HEK293 (cell line): ENCODE measurements at regions of chr15 and their contacts with region 1.

Region 1: GRCh38 chr15:68672781-68673205 is 94.0 kb downstream of the CORO2B start:
- H3K4me3 ChIP-seq: no peak overlapping the region
- H3K27ac ChIP-seq: no peak overlapping the region
- H3K4me1 ChIP-seq: no peaks in the 10 kb centered on the region
- CTCF ChIP-seq: peak; percentile 67

Region 2: DNA sequence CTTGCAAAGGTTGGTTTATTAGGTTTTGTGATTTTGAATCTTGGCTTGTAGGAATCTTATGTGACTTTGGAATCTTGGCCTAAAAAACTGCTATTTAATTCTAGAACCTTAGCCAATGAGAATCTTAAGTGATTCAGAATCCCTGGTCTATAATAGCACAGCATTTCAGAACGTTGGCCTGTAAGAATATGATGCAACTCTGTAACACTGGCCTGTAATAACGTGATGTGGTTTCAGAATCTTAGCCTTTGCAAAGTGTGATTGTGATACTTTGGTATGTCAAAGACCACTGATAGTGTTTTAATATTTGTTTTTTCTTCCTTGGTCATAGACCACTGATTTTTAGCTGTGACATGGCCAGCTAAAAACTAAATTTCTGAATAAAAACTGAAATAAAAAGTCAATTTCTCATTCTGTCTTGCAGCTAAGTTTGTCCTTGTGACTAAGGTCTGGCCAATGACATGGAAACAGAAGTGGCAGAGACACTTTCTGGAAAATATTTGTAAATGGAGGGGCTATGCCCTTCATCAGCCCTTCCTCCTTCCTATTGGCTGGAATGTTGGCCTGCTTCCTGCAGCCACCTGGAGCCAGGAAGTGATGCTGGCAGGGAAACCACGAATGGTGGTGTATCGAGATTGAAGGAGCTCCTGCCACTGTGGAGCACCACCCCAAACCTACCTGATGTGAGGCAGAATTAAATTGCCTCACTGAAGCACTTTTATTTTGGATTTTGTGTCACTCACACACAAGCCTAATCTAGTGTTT is 136.3 kb before region 1 on chr15:
- CTCF ChIA-PET with region 1: interaction called, 15 read pairs
- POLR2A ChIA-PET with region 1: no interaction called
- H3K4me3 ChIP-seq: no peak overlapping the region
- H3K27ac ChIP-seq: no peak overlapping the region
- H3K4me1 ChIP-seq: no peaks in the 10 kb centered on the region
- CTCF ChIP-seq: no peak

Region 3: DNA sequence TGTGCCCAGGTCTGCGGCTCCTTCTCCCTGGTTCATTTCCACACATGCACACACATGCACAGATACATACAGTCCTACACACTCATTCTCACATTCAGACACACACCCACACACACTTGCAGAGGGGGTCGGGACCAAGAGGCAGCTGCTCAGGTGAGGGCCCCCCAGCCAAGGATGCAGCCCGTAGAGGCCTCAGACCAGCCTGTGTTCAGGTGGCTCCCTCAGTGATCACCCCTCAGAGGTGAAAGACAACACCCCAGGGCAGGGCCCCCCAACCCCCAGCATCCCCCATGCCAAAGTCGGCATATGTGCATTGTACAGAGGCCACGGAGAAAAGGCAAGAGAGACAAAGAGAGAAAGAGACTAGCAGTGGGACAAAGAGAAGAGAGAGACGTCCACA is 99.9 kb before region 1 on chr15:
- CTCF ChIA-PET with region 1: interaction called, 36 read pairs
- POLR2A ChIA-PET with region 1: no interaction called
- H3K4me3 ChIP-seq: no peak overlapping the region
- H3K27ac ChIP-seq: no peak overlapping the region
- H3K4me1 ChIP-seq: peaks cover 3% of the 10 kb centered on the region; the same call in 1 of the 2 replicates
- CTCF ChIP-seq: no peak

Region 4: DNA sequence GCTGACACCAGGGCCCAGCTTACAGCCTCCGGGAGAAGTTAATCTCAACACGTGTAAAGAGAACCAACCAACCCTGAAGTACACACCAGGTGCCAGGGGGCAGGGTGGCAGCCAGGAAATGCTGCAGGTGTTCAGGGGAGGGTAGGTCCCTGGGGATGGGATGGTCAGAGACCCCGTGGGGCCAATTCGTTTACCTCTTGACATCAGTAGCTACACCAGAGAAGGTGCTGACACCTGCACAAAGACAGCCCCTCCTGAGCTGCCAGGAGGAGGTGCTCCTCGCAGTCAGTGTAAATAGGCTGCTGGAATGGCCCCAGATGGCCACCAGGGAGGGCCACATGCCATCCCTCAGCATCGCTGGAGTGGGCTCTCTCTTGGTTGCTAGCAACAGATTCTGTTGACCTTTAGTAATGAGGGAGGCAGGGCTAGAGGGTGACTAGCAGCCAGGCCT is 41.2 kb before region 1 on chr15:
- CTCF ChIA-PET with region 1: interaction called, 12 read pairs
- POLR2A ChIA-PET with region 1: no interaction called
- H3K4me3 ChIP-seq: no peak overlapping the region
- H3K27ac ChIP-seq: no peak overlapping the region
- H3K4me1 ChIP-seq: no peaks in the 10 kb centered on the region
- CTCF ChIP-seq: peak; percentile 30; the same call in 1 of the 2 replicates

Region 5: DNA sequence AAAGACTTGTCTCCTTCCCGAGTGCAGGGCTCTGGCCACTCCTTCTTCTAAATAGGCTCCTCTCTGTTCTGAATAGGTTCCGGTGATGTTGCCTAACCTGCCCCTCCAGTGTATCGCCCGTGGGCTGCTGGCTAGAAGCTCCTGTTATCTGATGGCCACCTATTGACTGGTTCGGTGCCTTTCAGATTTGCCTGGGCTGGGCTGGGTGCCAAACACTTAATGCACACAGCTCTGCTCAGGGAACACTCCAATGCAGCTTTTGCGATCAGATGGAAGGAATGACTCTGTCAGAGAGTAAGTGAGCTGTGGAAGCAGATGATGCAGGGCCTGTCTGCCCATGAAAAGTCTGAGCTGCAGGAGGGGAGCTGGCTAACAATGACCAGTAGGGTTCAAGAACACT is 18.9 kb after region 1 on chr15:
- CTCF ChIA-PET with region 1: interaction called, 32 read pairs
- POLR2A ChIA-PET with region 1: no interaction called
- H3K4me3 ChIP-seq: no peak overlapping the region
- H3K27ac ChIP-seq: no peak overlapping the region
- H3K4me1 ChIP-seq: peaks cover 5% of the 10 kb centered on the region
- CTCF ChIP-seq: no peak

Region 6: DNA sequence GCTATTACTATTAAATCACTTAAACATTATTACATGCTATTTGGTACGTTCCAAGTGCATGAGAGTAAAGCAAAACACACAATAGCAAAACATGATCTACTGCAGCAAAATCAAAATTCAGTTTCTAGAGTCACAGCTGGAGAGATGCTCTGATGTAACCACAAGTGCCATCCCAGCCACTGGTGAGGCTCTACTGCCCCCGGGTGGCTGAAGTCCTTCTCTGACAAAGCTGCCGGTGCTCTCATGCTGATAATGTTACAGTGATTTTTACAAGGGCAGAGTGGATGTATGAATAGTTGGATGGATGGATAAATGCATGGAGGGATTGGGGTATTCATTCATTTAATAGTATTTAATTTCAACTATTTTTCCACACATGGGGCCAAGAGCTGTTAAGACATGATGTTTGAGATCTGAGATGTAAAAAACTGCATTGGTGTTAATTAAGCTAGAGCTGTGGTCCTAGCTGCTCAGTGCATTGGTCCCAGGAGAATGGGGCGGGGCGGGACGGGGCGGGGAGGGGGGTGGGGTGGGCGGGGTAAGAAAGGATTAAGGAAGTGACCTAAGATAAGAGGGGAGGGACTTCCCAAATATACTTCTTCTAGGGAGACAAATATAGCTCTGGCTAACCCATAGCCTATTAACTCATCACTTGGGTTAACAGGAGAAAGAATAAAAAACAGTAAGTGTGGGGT is 252.2 kb after region 1 on chr15:
- CTCF ChIA-PET with region 1: interaction called, 25 read pairs
- POLR2A ChIA-PET with region 1: interaction called, 5 read pairs
- H3K4me3 ChIP-seq: no peak overlapping the region
- H3K27ac ChIP-seq: no peak overlapping the region
- H3K4me1 ChIP-seq: no peaks in the 10 kb centered on the region
- CTCF ChIP-seq: peak; percentile 92